ENCODE measurements at regions of chr11 and their contacts with region 1.

Region 1: DNA sequence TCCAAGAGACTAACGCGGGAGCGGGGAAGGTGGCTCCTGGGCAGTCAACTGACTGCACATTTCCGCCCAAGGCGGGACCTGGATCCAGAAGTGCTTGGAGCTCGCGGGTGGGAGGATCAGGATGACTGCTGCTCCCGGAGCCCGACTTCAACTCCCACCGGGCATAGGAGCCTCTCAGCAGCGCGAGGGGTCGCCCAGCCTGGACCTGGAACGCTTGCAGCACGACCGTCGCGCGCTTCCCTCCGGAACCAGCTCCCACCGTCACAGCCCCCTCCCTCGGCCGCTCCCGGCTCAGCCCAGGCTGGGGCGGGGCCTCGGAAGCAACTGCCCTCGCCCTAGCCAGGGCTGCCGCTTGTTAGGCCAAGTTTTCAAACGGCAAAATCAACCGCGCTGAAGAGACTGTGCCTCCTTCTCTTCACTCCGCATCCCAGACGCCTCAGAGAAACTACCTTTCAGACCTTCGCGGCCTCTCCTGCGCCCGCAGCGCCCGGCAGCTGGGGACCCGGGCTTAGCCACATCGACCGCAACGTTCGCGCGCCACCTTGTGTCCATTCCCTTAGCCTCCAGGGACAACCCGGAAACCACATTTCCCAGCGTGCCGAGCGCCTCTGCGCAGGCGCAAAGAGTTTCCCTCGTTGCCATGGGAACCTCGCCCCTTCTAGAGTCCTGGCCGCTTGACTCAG is 14.0 kb downstream of the SSH3 start:
- DNase-seq: peak; percentile 83 to 98
- H3K4me3 ChIP-seq: peak overlapping the region; percentile 66 to 83
- H3K27ac ChIP-seq: peak overlapping the region; percentile 80 to 86
- H3K4me1 ChIP-seq: peaks cover 0 to 12% of the 10 kb centered on the region in 2 donors
- H3K27me3 ChIP-seq: no peaks in the 10 kb centered on the region
- CTCF ChIP-seq: peak; percentile 94 to 100 (median 97)

Region 2: DNA sequence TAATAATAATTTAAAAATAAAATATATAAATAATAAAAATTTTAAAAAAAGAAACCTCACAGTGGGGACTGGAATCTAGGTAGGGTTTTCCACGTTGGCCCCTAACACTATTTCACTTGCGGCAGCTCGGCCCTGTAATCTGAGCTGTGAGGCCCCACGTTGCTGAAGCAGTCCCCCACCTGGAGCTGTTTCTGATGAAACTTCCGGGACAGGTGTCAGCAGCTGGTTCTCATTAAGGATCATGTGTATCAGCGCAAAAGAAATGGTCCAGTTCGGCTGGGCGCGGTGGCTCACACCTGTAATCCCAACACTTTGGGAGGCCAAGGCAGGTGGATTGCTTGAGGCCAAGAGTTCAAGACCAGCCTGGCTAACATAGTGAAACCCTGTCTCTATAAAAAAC is 243.4 kb before region 1 on chr11:
- intact Hi-C with region 1: loop called (anchors 2 kb)
- DNase-seq: no peak
- H3K4me3 ChIP-seq: no peak overlapping the region
- H3K27ac ChIP-seq: no peak overlapping the region
- H3K4me1 ChIP-seq: no peaks in the 10 kb centered on the region
- H3K27me3 ChIP-seq: no peaks in the 10 kb centered on the region
- CTCF ChIP-seq: no peak

Region 3: GRCh38 chr11:67082035-67082791 is 235.1 kb before region 1 on chr11:
- intact Hi-C with region 1: loop called (anchors 1 kb)
- DNase-seq: no peak
- H3K4me3 ChIP-seq: peak overlapping the region in 1 of 2 donors; percentile 44
- H3K27ac ChIP-seq: no peak overlapping the region
- H3K4me1 ChIP-seq: peaks cover 0 to 9% of the 10 kb centered on the region in 2 donors
- H3K27me3 ChIP-seq: no peaks in the 10 kb centered on the region
- CTCF ChIP-seq: no peak

Region 4: GRCh38 chr11:67265633-67266423 is 51.5 kb before region 1 on chr11:
- intact Hi-C with region 1: loop called (anchors 1 kb)
- DNase-seq: peak in 1 of 2 donors; percentile 85
- H3K4me3 ChIP-seq: peak overlapping the region; percentile 23 to 39
- H3K27ac ChIP-seq: peak overlapping the region; percentile 73 to 80
- H3K4me1 ChIP-seq: peaks cover 39 to 41% of the 10 kb centered on the region in 2 donors
- H3K27me3 ChIP-seq: no peaks in the 10 kb centered on the region
- CTCF ChIP-seq: peak; percentile 61 to 95 (median 72)

Region 5: GRCh38 chr11:67332081-67332691 is 14.8 kb after region 1 on chr11:
- intact Hi-C with region 1: no loop called
- DNase-seq: no peak
- H3K4me3 ChIP-seq: no peak overlapping the region
- H3K27ac ChIP-seq: no peak overlapping the region
- H3K4me1 ChIP-seq: no peaks in the 10 kb centered on the region
- H3K27me3 ChIP-seq: no peaks in the 10 kb centered on the region
- CTCF ChIP-seq: no peak

Region 6: DNA sequence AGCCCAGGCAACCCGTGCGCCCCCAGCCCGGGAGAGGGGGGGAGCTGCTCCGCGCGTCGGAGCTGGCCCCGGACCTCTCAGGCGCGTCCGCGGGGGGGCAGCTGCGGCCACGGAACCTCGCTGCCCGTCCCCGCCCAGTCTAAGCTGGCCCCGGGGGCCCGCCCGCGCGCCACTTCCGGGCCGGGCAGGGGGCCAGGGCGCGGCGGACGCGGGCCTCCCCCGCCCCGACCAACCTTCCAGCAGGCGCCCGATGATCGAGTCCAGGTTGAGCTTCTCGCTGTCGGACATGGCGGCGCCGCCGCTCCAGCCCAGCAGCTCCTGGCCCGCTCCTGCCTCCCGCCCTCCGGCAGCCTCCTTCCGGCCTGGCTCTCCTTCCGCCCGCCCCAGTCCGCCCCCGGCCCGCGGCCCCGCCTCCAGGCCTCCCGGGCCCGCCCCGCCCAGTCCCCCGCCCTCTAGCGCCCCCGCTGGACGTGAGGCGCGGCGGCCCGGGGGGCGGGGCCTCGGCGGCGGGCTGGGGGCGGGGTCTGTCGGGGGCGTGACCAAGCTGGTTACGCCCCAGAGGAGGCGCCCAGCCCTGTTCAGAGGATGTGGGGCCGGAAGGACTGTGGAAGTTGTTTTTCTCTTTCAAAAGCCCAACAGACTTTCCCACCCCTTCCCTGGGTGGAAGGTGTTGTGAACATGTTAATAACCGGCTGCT is 84.3 kb after region 1 on chr11 and contains the start of gene PPP1CA:
- intact Hi-C with region 1: no loop called
- DNase-seq: peak; percentile 63 to 94
- H3K4me3 ChIP-seq: peak within 1 kb of the TSS; percentile 88 to 99
- H3K27ac ChIP-seq: peak within 1 kb of the TSS; percentile 90 to 94
- H3K4me1 ChIP-seq: peaks cover 15 to 19% of the 10 kb centered on the region in 2 donors
- H3K27me3 ChIP-seq: no peaks in the 10 kb centered on the region
- CTCF ChIP-seq: peak; percentile 21 to 60 (median 38)
- total RNA-seq, gene PPP1CA: 113 TPM

Region 7: DNA sequence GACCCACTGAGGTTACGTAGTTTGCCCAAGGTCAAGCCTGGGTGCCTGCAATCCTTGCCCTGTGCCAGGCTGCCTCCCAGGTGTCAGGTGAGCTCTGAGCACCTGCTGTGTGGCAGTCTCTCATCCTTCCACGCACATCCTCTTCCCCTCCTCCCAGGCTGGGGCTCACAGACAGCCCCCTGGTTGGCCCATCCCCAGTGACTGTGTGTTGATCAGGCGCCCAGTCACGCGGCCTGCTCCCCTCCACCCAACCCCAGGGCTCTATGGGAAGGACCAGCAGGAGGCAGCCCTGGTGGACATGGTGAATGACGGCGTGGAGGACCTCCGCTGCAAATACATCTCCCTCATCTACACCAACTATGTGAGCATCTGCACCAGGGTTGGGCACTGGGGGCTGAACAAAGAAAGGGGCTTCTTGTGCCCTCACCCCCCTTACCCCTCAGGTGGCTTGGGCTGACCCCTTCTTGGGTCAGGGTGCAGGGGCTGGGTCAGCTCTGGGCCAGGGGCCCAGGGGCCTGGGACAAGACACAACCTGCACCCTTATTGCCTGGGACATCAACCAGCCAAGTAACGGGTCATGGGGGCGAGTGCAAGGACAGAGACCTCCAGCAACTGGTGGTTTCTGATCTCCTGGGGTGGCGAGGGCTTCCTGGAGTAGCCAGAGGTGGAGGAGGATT is 267.7 kb after region 1 on chr11:
- intact Hi-C with region 1: no loop called
- DNase-seq: no peak
- H3K4me3 ChIP-seq: peak overlapping the region; percentile 90 to 98
- H3K27ac ChIP-seq: peak overlapping the region; percentile 100
- H3K4me1 ChIP-seq: peaks cover 11 to 17% of the 10 kb centered on the region in 2 donors
- H3K27me3 ChIP-seq: no peaks in the 10 kb centered on the region
- CTCF ChIP-seq: no peak